HEK293 (cell line): ENCODE measurements at regions of chr2 and their contacts with region 1.

Region 1: DNA sequence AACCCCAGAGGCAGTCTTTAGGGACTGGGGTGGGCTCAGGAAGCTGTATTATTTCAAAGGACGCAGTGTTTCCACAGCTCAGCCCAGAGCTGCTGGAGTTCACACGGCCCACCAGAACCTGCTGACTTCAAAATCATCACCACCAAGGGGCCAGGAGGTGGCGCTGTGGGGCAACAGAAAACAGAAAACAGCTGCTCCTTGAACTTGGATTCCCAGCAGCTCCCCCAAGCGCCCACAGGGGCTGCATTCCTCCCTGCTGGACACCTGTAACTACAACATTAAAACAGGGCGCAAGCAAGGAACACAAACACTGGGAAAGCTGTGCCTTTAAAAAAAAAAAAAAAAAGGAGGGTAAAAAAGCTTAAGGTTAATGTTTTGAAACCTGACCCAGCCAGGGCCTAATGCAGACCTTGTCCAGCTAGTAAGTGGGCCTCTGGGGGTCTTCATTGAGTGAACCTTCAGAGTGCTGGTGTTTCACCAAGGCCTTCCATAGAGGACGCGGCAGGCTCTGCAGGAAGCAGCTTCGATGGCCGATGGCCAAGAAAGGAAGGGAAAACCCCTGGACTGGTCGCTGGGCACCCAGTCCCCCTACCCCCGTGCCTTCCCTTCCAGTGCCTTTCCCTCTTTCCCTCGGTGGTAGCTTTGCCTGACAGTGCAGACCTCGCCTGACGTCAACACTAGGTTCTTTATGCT is 25.9 kb downstream of the MLPH start:
- H3K4me3 ChIP-seq: no peak overlapping the region
- H3K27ac ChIP-seq: no peak overlapping the region
- H3K4me1 ChIP-seq: no peaks in the 10 kb centered on the region
- CTCF ChIP-seq: peak; percentile 93

Region 2: DNA sequence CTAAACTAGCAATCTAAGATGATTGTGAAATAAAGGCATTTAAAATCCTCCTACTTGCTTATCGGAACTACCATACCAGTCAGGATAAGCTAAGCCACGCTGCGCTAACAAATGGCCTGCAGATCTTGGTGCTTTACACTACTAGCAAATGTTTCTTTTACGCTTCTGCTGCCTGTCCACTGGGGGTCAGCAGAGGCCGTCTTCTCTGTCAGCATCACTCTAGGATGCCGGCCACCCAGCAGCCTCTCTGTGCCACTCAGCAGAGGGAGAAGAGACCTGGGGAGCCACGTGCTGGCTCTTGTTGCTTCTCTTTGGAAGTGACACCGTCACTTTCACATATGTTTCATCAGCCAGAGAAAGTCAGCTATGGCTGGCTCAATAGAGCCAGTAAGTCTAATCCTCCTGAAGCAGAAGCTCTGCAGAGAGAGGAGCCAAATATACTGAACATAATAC is 390.7 kb before region 1 on chr2:
- CTCF ChIA-PET with region 1: interaction called, 15 read pairs
- POLR2A ChIA-PET with region 1: no interaction called
- H3K4me3 ChIP-seq: no peak overlapping the region
- H3K27ac ChIP-seq: no peak overlapping the region
- H3K4me1 ChIP-seq: no peaks in the 10 kb centered on the region
- CTCF ChIP-seq: peak; percentile 36; the same call in 1 of the 2 replicates

Region 3: GRCh38 chr2:237421542-237422116 is 91.3 kb before region 1 on chr2:
- CTCF ChIA-PET with region 1: interaction called, 22 read pairs
- POLR2A ChIA-PET with region 1: interaction called, 3 read pairs
- H3K4me3 ChIP-seq: no peak overlapping the region; the same call in 1 of the 2 replicates
- H3K27ac ChIP-seq: no peak overlapping the region
- H3K4me1 ChIP-seq: peaks cover 5% of the 10 kb centered on the region
- CTCF ChIP-seq: peak; percentile 61

Region 4: DNA sequence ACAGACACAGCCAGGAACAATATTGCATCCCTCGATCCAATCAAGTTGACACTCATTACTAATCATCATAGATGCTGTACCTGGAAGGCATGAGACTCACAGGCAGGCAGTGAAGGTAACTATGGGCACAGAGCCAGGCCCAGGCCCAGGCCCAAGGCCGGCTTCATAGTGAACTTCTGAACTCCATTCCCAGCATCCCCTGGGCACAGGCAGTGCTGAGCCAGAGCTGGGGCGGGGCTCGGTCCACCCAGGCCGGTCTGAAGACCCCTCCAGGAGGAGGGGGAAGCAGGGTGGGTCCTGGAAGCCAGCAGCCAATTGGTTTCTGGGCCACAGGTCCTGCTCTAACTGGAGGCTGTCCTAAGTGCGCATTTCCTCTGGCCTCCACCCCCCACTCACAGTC is 11.7 kb after region 1 on chr2:
- CTCF ChIA-PET with region 1: interaction called, 15 read pairs
- POLR2A ChIA-PET with region 1: interaction called, 3 read pairs
- H3K4me3 ChIP-seq: no peak overlapping the region
- H3K27ac ChIP-seq: no peak overlapping the region
- H3K4me1 ChIP-seq: no peaks in the 10 kb centered on the region
- CTCF ChIP-seq: no peak

Region 5: DNA sequence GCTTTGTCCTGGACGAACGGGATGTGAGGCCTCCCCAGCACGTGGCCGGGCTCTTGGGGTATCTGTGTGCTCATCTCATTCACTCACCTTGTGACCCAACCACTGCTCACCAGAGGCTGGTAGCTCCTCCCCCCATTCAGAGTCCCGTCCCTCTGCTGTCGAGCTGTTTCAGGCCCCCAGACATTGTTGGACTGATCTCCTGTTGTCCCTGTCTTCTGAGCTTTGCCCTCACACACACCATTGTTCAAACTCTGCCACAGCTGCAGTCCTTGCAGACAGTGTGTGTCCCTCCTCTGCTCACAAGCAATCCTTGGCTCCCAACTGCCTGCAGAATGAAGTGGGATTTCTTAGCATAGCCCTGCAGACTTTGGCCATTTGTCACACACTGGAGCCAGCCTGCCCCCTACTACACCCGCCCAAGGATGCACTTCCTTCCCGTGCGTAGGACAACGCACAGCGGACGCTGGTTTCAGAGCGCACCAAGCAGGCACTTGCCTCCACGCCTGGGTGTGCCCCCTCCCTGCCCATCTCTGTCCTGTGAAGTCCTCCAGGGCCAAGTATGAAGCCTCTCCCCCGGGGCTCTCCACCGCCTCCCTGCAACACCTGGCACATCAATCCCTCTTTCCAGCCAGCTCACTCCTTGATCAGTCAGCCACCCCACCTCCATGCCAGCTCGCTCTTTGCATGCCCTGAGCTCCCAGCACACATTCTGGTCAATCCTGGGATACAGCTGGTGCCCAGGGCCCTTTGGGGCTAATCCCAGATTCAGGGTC is 36.9 kb after region 1 on chr2:
- CTCF ChIA-PET with region 1: interaction called, 10 read pairs
- POLR2A ChIA-PET with region 1: no interaction called
- H3K4me3 ChIP-seq: no peak overlapping the region
- H3K27ac ChIP-seq: no peak overlapping the region
- H3K4me1 ChIP-seq: no peaks in the 10 kb centered on the region
- CTCF ChIP-seq: no peak

Region 6: GRCh38 chr2:237744613-237745249 is 231.8 kb after region 1 on chr2:
- CTCF ChIA-PET with region 1: interaction called, 12 read pairs
- POLR2A ChIA-PET with region 1: no interaction called
- H3K4me3 ChIP-seq: no peak overlapping the region
- H3K27ac ChIP-seq: no peak overlapping the region
- H3K4me1 ChIP-seq: peaks cover 6% of the 10 kb centered on the region; the same call in 1 of the 2 replicates
- CTCF ChIP-seq: peak; percentile 83

Region 7: GRCh38 chr2:237786936-237787335 is 274.0 kb after region 1 on chr2:
- CTCF ChIA-PET with region 1: no interaction called
- POLR2A ChIA-PET with region 1: no interaction called
- H3K4me3 ChIP-seq: no peak overlapping the region
- H3K27ac ChIP-seq: no peak overlapping the region
- H3K4me1 ChIP-seq: no peaks in the 10 kb centered on the region
- CTCF ChIP-seq: no peak

Region 8: DNA sequence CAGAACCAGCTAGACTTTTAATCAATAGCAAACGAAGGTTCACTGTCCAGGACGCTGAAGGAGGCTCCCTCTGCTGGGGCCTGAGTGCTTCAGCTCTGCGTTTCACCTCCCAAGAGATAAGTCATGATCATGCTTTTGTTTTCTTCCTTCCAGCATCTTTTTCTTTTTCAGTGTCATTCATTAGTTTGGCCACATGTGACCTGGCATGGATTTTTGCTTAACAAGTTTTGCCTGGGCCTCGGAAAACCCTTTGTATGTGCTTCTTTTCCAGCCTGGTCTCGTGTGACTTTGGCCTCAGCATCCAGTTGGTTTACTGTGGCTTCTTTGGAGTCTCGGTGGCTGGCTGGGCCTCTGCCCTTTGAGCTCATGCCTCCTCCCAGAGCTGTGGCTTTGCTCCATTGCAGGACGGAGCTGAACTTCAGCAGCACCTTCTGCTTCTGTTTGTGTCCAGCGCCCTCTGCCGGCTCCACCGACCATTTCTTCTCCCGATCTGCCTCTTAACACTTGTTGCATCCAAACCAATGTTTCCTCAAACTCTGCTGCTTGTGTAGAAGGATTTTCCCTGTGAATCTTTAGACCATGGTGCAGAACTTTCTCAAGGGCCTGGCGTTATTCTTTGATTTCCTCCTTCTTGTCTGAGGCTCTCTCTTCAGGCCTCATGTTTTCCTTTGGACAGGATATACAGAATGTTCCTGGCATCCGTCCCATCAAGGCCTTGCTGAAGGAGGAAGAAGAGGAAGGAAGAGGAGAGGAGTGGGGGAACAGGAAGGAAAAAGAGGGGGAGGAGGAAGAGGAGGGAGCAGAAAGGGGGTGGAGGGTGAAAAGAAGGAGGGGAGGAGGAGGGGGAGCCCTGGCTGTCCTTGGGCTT is 750.5 kb after region 1 on chr2:
- CTCF ChIA-PET with region 1: interaction called, 11 read pairs
- POLR2A ChIA-PET with region 1: no interaction called
- H3K4me3 ChIP-seq: no peak overlapping the region
- H3K27ac ChIP-seq: no peak overlapping the region
- H3K4me1 ChIP-seq: no peaks in the 10 kb centered on the region
- CTCF ChIP-seq: peak; percentile 84